ENCODE measurements at regions of chr11 and their contacts with region 1.

Region 1: GRCh38 chr11:14907411-14908213 is 15.6 kb upstream of the CYP2R1 start:
- DNase-seq: peak; percentile 81 to 89 (median 84)
- ATAC-seq: peak; percentile 61
- H3K4me3 ChIP-seq: no peak overlapping the region
- H3K27ac ChIP-seq: peak overlapping the region in 1 of 4 donors; percentile 29
- H3K4me1 ChIP-seq: peaks cover 38% of the 10 kb centered on the region
- H3K27me3 ChIP-seq: no peaks in the 10 kb centered on the region
- CTCF ChIP-seq: peak; percentile 69 to 81 (median 75)
- POLR2A ChIP-seq: no peak

Region 2: GRCh38 chr11:14258221-14258935 is 649.2 kb before region 1 on chr11:
- intact Hi-C with region 1: no loop called
- DNase-seq: no peak
- ATAC-seq: no peak
- H3K4me3 ChIP-seq: no peak overlapping the region
- H3K27ac ChIP-seq: no peak overlapping the region
- H3K4me1 ChIP-seq: no peaks in the 10 kb centered on the region
- H3K27me3 ChIP-seq: no peaks in the 10 kb centered on the region
- CTCF ChIP-seq: no peak
- POLR2A ChIP-seq: no peak

Region 3: GRCh38 chr11:14537134-14537599 is 370.4 kb before region 1 on chr11:
- intact Hi-C with region 1: loop called (anchors 5 kb)
- DNase-seq: peak in 3 of 4 donors; percentile 42 to 60 (median 53)
- ATAC-seq: peak; percentile 34
- H3K4me3 ChIP-seq: no peak overlapping the region
- H3K27ac ChIP-seq: peak overlapping the region in 1 of 4 donors; percentile 7
- H3K4me1 ChIP-seq: peaks cover 41% of the 10 kb centered on the region
- H3K27me3 ChIP-seq: no peaks in the 10 kb centered on the region
- CTCF ChIP-seq: peak; percentile 57 to 86 (median 73)
- POLR2A ChIP-seq: no peak

Region 4: DNA sequence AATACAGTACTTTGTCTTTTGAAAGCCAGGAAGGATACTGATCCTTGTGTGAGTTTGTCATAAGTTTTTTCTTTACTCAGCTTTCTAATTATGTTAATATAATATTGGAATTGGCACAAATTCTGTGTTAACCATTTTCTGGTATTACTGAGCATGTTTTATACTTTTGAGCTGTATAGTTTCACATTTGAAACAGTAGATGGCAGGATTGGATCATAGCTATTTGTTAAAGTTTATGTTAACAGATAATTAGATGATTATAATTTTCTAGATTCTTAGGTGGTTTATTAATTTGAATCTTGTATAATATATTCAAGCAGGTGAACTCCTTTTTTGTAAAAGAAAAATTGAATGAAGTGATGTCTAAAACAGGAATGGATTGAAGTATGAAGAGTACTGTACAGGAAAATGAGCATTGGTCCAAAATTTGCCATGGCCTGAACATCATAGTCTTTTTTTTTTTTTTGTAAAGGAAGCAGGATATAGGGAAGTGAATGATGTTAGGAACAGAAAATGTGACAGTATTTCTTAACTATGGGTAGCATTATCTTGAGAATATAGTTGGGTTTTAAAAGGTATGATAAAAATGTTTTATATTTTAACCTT is 117.6 kb before region 1 on chr11:
- intact Hi-C with region 1: loop called (anchors 10 kb)
- DNase-seq: no peak
- ATAC-seq: no peak
- H3K4me3 ChIP-seq: no peak overlapping the region
- H3K27ac ChIP-seq: no peak overlapping the region
- H3K4me1 ChIP-seq: peaks cover 4% of the 10 kb centered on the region
- H3K27me3 ChIP-seq: no peaks in the 10 kb centered on the region
- CTCF ChIP-seq: peak in 6 of 7 experiments; percentile 30 to 59 (median 52)
- POLR2A ChIP-seq: no peak